ENCODE measurements at regions of chr12 and their contacts with region 1.

Region 1: DNA sequence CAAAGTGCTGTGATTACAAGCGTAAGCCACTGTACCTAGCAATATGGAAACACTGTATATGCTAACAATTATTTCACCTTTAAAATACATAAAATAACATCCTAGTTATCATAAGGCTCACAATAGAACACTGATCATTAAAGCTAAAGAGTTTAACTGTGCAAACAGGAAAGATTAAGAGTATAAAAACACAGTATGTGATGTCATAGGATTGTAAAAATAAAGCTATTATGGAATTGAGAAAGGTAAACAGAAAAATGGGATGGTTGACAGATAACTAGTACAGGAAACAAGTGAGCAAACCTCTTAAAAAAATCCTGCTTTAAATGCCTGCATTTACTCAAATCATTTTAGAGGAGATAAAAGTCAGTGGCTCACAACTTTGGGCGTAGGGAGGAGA is 10.8 kb upstream of the IPO8 start:
- DNase-seq: no peak
- CTCF ChIP-seq: no peak

Region 2: DNA sequence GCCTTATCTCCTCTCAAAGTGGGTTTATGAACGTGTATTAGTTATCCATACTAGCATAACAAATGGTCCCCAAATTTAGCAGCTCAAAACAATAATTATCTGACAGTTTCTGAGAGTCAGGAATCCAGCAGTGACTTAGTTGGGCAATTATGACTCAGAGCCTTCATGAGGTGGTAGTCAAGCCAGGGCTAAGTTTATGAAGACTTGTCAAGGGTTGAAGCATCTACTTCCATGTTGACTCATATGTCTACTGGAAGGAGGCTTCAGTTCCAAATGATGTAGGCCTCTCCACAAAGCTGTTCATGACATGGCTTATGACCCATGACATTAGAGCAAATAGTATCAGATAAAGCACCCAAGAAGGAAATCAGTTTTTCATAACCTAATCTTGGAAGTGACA is 84.0 kb before region 1 on chr12:
- CTCF ChIA-PET with region 1: no interaction called
- POLR2A ChIA-PET with region 1: no interaction called
- DNase-seq: peak; percentile 15
- CTCF ChIP-seq: no peak

Region 3: GRCh38 chr12:30695199-30696103 is 11.0 kb before region 1 on chr12 and contains the start of gene IPO8:
- CTCF ChIA-PET with region 1: interaction called, 16 read pairs
- POLR2A ChIA-PET with region 1: interaction called, 3 read pairs
- DNase-seq: peak; percentile 94
- CTCF ChIP-seq: peak; percentile 30